ENCODE measurements at regions of chr11 and their contacts with region 1.

Region 1: DNA sequence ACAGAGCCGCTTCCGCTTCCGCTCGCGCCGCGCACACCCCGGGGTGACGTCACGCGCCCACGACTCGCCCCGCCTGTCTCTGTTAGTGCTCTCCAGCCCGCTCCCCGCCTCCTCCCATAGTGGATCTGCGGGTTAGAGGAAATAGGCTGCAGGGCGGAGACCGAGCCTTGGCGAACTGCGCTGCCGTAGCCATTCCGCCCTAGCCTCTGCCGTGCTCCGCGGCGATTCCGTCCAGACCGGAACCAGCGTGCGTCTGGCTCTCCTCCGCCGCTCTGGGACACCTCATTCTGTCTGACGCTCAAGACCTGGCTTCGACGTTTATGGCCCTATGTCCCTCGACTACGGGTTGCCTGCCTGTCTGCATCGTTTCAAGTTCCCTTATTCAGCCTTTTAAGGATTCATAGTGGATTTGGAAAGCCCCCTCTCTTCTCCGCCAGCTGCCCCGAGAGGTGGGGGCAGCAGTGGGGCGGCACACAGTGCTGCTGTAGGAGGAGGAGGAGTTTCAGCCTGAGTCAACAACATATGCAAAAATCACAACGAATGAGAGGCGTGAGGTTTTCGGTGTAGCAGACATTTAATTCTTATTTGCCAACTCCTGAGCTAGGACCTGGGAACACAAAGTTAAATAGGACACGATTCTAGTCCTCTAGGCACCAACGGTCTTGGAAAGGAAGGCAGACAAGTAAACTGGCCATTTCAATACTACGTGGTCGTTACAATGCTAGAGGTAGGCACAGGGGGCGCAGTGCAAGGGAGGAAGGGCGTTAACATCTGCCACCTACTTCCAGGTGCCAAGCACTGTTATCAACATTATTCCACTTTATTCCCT is at the start of gene TAF10:
- DNase-seq: peak; percentile 77
- ATAC-seq: peak; percentile 92
- H3K4me3 ChIP-seq: peak within 1 kb of the TSS; percentile 87
- H3K27ac ChIP-seq: peak within 1 kb of the TSS; percentile 99
- H3K4me1 ChIP-seq: peaks cover 25% of the 10 kb centered on the region
- H3K27me3 ChIP-seq: no peaks in the 10 kb centered on the region
- CTCF ChIP-seq: peak; percentile 30 to 62 (median 42); a peak in 5 of 6 replicates
- EP300 ChIP-seq: no peak
- POLR2A ChIP-seq: peak; percentile 96
- RAD21 ChIP-seq: no peak
- polyA plus RNA-seq, gene TAF10: 27.2 to 78.9 TPM

Region 2: GRCh38 chr11:6646918-6647679 is 34.7 kb after region 1 on chr11:
- CTCF ChIA-PET with region 1: no interaction called
- POLR2A ChIA-PET with region 1: interaction called, 10 read pairs
- RAD21 ChIA-PET with region 1: interaction called, 3 read pairs
- SMC1A ChIA-PET with region 1: interaction called, 14 read pairs
- in situ Hi-C with region 1: no loop called
- intact Hi-C with region 1: no loop called
- DNase-seq: peak; percentile 61
- ATAC-seq: peak; percentile 97
- H3K4me3 ChIP-seq: no peak overlapping the region
- H3K27ac ChIP-seq: peak overlapping the region; percentile 68
- H3K4me1 ChIP-seq: peaks cover 21% of the 10 kb centered on the region
- H3K27me3 ChIP-seq: no peaks in the 10 kb centered on the region
- CTCF ChIP-seq: no peak
- EP300 ChIP-seq: peak in 1 of 2 experiments; percentile 63; a peak in 1 of 4 replicates
- POLR2A ChIP-seq: peak; percentile 37; the same call in 1 of the 2 replicates
- RAD21 ChIP-seq: no peak

Measured in GM12878 (cell line).